ENCODE measurements at regions of chr6 and their contacts with region 1.

Region 1: DNA sequence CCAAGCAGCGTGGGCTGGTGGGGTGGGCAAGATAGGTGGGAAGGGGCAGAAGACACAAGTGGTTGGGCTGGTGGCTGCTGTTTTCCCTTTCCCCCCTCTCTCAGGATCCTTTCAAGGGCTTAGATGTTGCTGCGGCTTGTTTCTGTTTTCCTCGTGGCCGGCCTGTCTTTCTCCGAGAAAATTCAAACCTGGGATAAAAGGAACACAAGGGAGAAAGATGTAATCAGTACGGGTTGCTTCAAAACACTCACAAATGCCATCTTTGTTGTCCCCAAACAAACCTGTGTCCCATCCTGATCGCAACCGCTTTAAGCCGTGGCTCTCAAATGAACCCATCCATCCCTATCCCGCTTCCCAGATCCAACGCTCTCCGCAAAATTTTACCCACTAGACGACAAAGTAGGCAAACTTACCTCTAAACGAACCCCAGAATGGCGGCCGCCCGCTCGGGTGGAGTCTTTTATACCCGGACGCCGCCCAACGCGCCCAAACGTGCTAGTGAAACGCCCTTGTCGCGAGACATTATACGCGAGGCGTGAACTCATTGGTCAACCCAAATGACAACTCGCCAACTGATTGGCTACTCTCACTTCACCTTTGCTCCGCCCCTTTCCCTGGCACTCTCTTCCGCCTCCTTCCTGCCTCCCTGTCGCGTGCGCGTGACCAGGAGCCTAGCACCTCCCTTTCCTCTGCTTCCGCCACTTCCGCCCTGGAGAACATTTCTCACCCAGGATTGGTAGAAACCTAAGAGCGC is at the start of gene PPP1R10:
- DNase-seq: peak; percentile 99
- H3K4me3 ChIP-seq: peak within 1 kb of the TSS; percentile 77
- H3K4me3 Mint-ChIP-seq: peak within 1 kb of the TSS; percentile 78
- H3K27ac Mint-ChIP-seq: peak within 1 kb of the TSS; percentile 96
- H3K4me1 ChIP-seq: no peaks in the 10 kb centered on the region
- H3K4me1 Mint-ChIP-seq: peaks cover 22% of the 10 kb centered on the region
- H3K27me3 ChIP-seq: no peaks in the 10 kb centered on the region
- H3K27me3 Mint-ChIP-seq: peaks cover 6% of the 10 kb centered on the region
- CTCF ChIP-seq: no peak
- total RNA-seq, gene PPP1R10: 91.3 and 95.4 TPM in 2 replicates

Region 2: DNA sequence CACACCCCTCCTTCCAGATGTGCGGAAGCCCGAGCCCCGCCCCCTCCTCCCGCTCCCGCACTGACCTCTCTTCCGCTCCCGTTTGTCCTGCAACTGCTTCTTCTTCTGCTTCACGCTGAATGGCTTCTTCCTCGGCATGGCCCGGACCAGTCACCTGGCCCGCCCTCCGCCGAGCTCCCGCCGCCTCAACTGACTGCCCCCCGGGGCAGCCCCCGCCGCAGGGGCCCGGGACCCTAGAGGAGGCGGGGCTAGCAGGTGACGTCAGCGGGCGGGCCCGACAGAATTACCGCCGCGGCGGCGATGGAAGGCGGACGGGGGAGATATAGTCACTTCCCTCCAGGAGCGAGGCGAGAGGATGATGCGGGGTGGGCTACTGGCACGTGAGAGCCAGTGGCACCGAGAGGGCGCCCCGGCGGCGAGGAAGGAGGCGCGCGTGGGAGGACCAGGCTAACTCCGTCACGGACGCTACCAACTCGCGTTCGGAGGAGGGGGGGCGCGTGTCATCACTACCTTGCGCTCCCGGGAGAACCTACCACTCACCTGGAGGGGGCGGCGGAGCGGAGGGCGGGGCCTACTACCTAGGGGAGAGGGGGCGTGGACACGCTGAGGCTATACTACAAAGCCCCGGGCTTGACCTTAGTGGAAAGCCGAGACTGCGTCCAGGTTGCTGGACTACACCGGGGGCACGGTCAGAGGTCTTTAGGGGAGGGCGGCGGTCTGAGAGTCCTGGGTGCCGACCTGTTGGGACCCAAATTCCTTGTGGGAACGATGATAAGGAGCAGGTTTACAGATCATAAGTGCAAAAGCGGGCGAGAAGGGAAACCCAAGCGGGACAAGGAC is 60.7 kb before region 1 on chr6 and contains the start of gene GNL1:
- CTCF ChIA-PET with region 1: no interaction called
- POLR2A ChIA-PET with region 1: interaction called, 5 read pairs
- intact Hi-C with region 1: loop called (anchors 2 kb)
- DNase-seq: peak; percentile 98 to 99
- H3K4me3 ChIP-seq: peak within 1 kb of the TSS; percentile 88
- H3K4me3 Mint-ChIP-seq: peak within 1 kb of the TSS; percentile 95
- H3K27ac Mint-ChIP-seq: peak within 1 kb of the TSS; percentile 100
- H3K4me1 ChIP-seq: peaks cover 5% of the 10 kb centered on the region; the same call in 1 of the 2 replicates
- H3K4me1 Mint-ChIP-seq: peaks cover 14% of the 10 kb centered on the region
- H3K27me3 ChIP-seq: no peaks in the 10 kb centered on the region
- H3K27me3 Mint-ChIP-seq: no peaks in the 10 kb centered on the region
- CTCF ChIP-seq: no peak
- total RNA-seq, gene GNL1: 84.1 and 94.1 TPM in 2 replicates

Region 3: GRCh38 chr6:30571075-30571768 is 45.8 kb before region 1 on chr6 and contains the start of gene ABCF1:
- CTCF ChIA-PET with region 1: no interaction called
- POLR2A ChIA-PET with region 1: interaction called, 10 read pairs
- intact Hi-C with region 1: no loop called
- DNase-seq: peak; percentile 96 to 99
- H3K4me3 ChIP-seq: peak within 1 kb of the TSS; percentile 83
- H3K4me3 Mint-ChIP-seq: peak within 1 kb of the TSS; percentile 86
- H3K27ac Mint-ChIP-seq: peak within 1 kb of the TSS; percentile 93
- H3K4me1 ChIP-seq: peaks cover 15% of the 10 kb centered on the region; the same call in 1 of the 2 replicates
- H3K4me1 Mint-ChIP-seq: peaks cover 30% of the 10 kb centered on the region
- H3K27me3 ChIP-seq: no peaks in the 10 kb centered on the region
- H3K27me3 Mint-ChIP-seq: no peaks in the 10 kb centered on the region
- CTCF ChIP-seq: no peak
- total RNA-seq, gene ABCF1: 93.7 and 95.6 TPM in 2 replicates

Region 4: DNA sequence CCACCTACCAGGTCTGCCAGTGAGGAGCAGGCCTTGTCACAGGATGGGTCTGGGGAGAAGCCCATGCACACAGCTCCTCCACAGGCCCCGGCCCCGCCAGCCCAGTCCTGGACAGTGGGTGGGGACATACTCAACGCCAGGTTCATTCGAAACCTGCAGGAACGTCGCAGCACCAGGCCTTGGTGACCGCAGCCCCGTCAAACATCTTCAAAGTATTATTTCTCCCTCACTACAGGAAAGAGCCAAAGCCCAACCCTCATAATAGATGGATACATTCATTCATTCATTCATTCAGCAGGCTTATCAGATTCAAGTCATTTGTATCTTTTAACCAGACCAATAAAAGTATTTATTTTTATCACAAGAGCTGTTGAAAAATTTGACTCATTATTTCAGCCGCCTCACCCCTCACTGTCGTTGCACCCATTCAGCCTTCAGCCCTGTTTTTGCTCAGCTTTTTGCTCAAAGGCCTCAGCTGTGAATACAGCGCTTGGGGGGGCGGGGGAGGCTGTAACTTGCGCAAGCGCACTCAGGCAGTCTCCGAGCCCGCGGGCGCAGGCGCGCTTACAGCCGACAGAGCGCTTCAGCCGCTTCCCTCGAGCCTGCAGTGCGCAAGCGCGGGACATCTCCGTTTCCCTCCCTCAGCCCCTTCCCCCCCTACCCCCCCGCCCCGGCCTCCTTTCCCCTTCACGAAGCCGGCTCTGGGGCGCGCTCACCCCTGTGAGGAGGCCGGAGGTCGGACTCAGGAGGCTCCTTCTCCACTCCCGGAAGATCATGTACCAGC is 29.7 kb after region 1 on chr6 and contains the start of gene C6orf136:
- CTCF ChIA-PET with region 1: interaction called, 3 read pairs
- POLR2A ChIA-PET with region 1: interaction called, 10 read pairs
- intact Hi-C with region 1: loop called (anchors 1 kb)
- DNase-seq: peak; percentile 91 to 93
- H3K4me3 ChIP-seq: peak within 1 kb of the TSS; percentile 83
- H3K4me3 Mint-ChIP-seq: peak within 1 kb of the TSS; percentile 82
- H3K27ac Mint-ChIP-seq: peak within 1 kb of the TSS; percentile 67
- H3K4me1 ChIP-seq: no peaks in the 10 kb centered on the region
- H3K4me1 Mint-ChIP-seq: peaks cover 16% of the 10 kb centered on the region
- H3K27me3 ChIP-seq: no peaks in the 10 kb centered on the region
- H3K27me3 Mint-ChIP-seq: no peaks in the 10 kb centered on the region
- CTCF ChIP-seq: no peak
- total RNA-seq, gene C6orf136: 25.4 and 25.7 TPM in 2 replicates

Region 5: DNA sequence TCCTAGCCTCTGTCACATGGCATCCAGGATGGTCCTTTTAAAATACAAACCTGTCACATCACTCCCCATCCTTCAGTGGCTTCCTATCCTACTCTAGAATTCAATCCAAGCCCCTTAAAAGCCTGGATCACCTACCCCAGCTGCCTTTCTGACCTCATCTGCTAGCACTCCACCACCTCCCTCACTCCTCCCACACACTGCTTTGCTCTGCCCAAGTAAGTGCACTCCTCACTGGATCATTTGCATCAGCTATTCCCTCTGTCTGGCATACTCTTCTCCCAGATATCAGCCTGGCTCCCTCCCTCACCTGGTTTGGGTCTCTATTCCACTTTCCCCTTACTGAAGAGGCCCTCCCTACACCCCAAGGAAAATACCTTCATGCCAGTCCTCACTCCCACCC is 40.5 kb after region 1 on chr6:
- CTCF ChIA-PET with region 1: no interaction called
- POLR2A ChIA-PET with region 1: no interaction called
- intact Hi-C with region 1: no loop called
- DNase-seq: no peak
- H3K4me3 ChIP-seq: no peak overlapping the region
- H3K4me3 Mint-ChIP-seq: no peak overlapping the region
- H3K27ac Mint-ChIP-seq: no peak overlapping the region
- H3K4me1 ChIP-seq: no peaks in the 10 kb centered on the region
- H3K4me1 Mint-ChIP-seq: no peaks in the 10 kb centered on the region
- H3K27me3 ChIP-seq: no peaks in the 10 kb centered on the region
- H3K27me3 Mint-ChIP-seq: no peaks in the 10 kb centered on the region
- CTCF ChIP-seq: no peak

Region 6: DNA sequence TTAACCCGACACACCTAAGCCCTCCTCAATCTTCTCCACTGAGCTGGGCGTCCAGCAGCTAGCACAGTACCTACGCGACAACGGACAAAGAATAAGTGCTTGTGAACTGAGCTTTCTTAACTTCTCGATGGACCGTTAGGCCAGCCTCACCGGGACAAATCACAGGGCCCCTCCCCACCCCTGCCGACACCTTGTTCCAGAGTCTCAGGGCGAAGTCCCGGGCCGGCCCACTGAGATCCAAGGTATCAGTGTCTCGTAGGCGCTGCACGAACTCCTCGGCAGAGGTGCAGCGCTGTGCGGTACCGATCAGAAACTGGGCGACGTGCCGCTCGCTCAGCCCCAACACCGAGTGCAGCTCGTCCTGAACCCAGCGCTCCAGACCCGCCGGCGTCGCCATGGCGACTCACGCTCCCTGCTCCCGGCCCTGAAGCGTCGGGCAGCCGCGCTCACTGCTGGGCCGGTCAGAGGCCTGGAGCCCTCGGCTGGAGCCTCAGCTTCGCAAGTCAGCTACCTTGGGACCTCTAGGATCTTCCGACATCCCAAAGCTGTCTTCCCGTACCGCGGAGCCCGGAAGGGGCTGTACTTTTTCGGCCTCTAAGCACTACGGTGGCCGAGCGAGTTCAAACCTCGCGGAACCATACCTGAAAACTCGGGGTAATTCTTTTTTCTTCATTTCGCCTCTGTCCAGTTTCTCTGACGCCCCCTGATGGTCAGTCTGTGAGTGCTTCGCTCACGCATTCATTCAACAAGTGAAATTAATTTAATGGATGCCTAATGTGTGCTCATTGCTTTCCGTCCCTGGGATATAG is 55.7 kb after region 1 on chr6 and contains the start of gene DHX16:
- CTCF ChIA-PET with region 1: interaction called, 3 read pairs
- POLR2A ChIA-PET with region 1: interaction called, 9 read pairs
- intact Hi-C with region 1: loop called (anchors 1 kb)
- DNase-seq: peak; percentile 96
- H3K4me3 ChIP-seq: peak within 1 kb of the TSS; percentile 85
- H3K4me3 Mint-ChIP-seq: peak within 1 kb of the TSS; percentile 77
- H3K27ac Mint-ChIP-seq: peak within 1 kb of the TSS; percentile 71
- H3K4me1 ChIP-seq: peaks cover 6% of the 10 kb centered on the region
- H3K4me1 Mint-ChIP-seq: peaks cover 5% of the 10 kb centered on the region
- H3K27me3 ChIP-seq: no peaks in the 10 kb centered on the region
- H3K27me3 Mint-ChIP-seq: no peaks in the 10 kb centered on the region
- CTCF ChIP-seq: peak; percentile 80 to 85
- total RNA-seq, gene DHX16: 36.6 and 40.6 TPM in 2 replicates

Region 7: GRCh38 chr6:30707281-30707872 is 90.4 kb after region 1 on chr6:
- CTCF ChIA-PET with region 1: no interaction called
- POLR2A ChIA-PET with region 1: interaction called, 21 read pairs
- intact Hi-C with region 1: no loop called
- DNase-seq: no peak
- H3K4me3 ChIP-seq: no peak overlapping the region
- H3K4me3 Mint-ChIP-seq: no peak overlapping the region
- H3K27ac Mint-ChIP-seq: no peak overlapping the region
- H3K4me1 ChIP-seq: no peaks in the 10 kb centered on the region
- H3K4me1 Mint-ChIP-seq: peaks cover 7% of the 10 kb centered on the region
- H3K27me3 ChIP-seq: no peaks in the 10 kb centered on the region
- H3K27me3 Mint-ChIP-seq: no peaks in the 10 kb centered on the region
- CTCF ChIP-seq: no peak

Measured in Caco-2 (cell line).